ENCODE measurements at regions of chr19 and their contacts with region 1.

Region 1: GRCh38 chr19:32464279-32464678 is 58.7 kb downstream of the DPY19L3 start:
- DNase-seq: peak; percentile 37
- H3K4me3 ChIP-seq: no peak overlapping the region
- H3K27ac ChIP-seq: no peak overlapping the region
- H3K4me1 ChIP-seq: no peaks in the 10 kb centered on the region; a peak in 1 of 4 replicates
- H3K27me3 ChIP-seq: no peaks in the 10 kb centered on the region
- CTCF ChIP-seq: peak; percentile 56
- EP300 ChIP-seq: no peak
- RAD21 ChIP-seq: peak; percentile 59

Region 2: GRCh38 chr19:32453736-32454135 is 10.5 kb before region 1 on chr19:
- CTCF ChIA-PET with region 1: interaction called, 10 read pairs
- POLR2A ChIA-PET with region 1: no interaction called
- DNase-seq: no peak
- H3K4me3 ChIP-seq: no peak overlapping the region
- H3K27ac ChIP-seq: no peak overlapping the region
- H3K4me1 ChIP-seq: peaks cover 0 to 7% of the 10 kb centered on the region in 2 experiments; a peak in 1 of 4 replicates
- H3K27me3 ChIP-seq: no peaks in the 10 kb centered on the region
- CTCF ChIP-seq: no peak
- EP300 ChIP-seq: no peak
- RAD21 ChIP-seq: no peak

Region 3: DNA sequence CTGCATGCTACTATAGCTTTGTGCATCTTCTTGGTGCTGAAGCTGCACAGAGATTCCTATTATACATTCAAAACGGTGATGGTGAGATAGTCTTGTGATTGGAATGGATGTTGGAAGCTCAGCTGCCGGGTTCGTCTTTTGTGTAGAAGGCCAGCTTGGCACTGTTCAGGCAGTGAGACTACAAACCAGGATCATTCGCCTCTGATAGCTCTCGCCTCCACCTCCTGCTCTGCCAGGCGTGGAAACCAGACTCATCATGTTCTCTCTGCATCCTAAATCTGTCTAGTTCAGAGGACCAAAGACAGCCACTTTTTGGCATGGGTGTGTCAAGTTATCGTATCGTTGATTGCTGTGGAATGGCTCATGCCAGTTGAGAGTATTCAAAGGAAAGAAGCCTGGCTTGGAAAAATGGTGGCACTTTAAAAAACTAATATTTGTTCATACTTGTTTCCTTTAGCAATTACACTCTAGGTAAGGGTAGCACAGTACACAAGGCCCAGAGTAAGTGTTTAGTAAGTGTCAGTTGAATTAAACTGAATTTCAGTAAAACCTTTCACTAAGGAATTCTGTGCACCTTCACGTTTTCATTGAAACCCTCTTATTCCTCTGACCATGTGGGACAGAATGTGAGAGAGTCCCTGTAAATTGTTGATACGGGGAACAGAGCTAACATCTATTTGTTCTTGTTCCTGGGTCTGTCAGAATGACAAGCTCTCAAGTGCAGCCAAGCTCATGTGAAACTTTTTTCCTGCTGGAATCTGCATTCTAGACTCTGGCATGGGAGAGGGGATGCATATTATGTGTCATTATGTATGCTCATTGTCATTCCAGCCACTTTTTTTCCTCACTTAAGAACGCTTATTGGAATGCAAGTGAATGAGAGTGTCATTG is 11.1 kb after region 1 on chr19:
- CTCF ChIA-PET with region 1: interaction called, 15 read pairs
- POLR2A ChIA-PET with region 1: no interaction called
- DNase-seq: no peak
- H3K4me3 ChIP-seq: no peak overlapping the region
- H3K27ac ChIP-seq: no peak overlapping the region
- H3K4me1 ChIP-seq: peaks cover 0 to 7% of the 10 kb centered on the region in 2 experiments; a peak in 1 of 4 replicates
- H3K27me3 ChIP-seq: no peaks in the 10 kb centered on the region
- CTCF ChIP-seq: no peak
- EP300 ChIP-seq: no peak
- RAD21 ChIP-seq: no peak

Measured in SK-N-SH (cell line).